ENCODE measurements at regions of chr7 and their contacts with region 1.

Region 1: GRCh38 chr7:142412551-142413193 is 154.8 kb upstream of the PRSS58 start:
- DNase-seq: peak; percentile 62
- H3K4me3 Mint-ChIP-seq: no peak overlapping the region
- H3K27ac Mint-ChIP-seq: no peak overlapping the region
- H3K4me1 Mint-ChIP-seq: peaks cover 7% of the 10 kb centered on the region
- H3K27me3 Mint-ChIP-seq: peaks cover 10% of the 10 kb centered on the region

Region 2: GRCh38 chr7:142385491-142386340 is 27.0 kb before region 1 on chr7:
- CTCF ChIA-PET with region 1: interaction called, 22 read pairs
- DNase-seq: peak; percentile 64
- H3K4me3 Mint-ChIP-seq: no peak overlapping the region
- H3K27ac Mint-ChIP-seq: peak overlapping the region; percentile 0
- H3K4me1 Mint-ChIP-seq: peaks cover 27% of the 10 kb centered on the region
- H3K27me3 Mint-ChIP-seq: peaks cover 31% of the 10 kb centered on the region

Region 3: DNA sequence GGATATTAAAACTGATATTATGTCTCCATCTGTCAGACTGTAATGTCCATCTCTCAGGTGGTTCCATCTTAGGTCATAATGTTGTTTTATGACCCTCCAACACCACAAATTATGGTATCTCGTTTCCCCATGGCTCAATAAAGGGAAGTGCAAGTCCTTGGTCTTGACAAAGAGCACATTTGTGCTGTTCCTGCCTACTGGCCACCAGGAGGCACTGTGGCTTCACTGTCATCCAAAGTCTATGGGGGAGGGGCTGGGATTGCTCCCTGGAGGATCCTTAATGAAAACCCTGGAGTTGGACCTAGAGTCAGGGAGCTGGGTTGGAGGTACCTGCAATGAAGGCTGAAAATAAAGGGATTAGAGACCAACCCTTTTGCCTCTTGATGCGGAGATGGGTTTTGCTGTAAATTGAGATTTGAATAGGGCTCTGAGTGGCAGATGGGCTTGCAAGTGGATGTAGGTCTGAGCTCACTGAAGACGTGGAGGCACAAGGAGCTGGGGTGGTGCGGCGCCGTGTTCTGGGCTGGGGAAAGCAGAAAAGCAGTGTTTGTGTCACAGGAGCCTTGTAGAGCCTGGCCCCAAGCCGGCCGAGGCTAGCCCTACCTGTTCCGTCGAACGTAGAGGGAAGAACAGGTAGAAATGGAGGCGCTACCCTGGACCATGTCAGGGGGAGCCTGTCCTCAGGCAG is 25.7 kb after region 1 on chr7:
- CTCF ChIA-PET with region 1: interaction called, 13 read pairs
- DNase-seq: peak; percentile 58
- H3K4me3 Mint-ChIP-seq: no peak overlapping the region
- H3K27ac Mint-ChIP-seq: no peak overlapping the region
- H3K4me1 Mint-ChIP-seq: peaks cover 60% of the 10 kb centered on the region
- H3K27me3 Mint-ChIP-seq: peaks cover 6% of the 10 kb centered on the region